SK-N-SH (cell line): ENCODE measurements at regions of chr7 and their contacts with region 1.

Region 1: GRCh38 chr7:1044191-1045068 is at the start of gene GPR146:
- DNase-seq: peak; percentile 100
- H3K4me3 ChIP-seq: peak within 1 kb of the TSS; percentile 78 to 79
- H3K27ac ChIP-seq: peak within 1 kb of the TSS; percentile 66 to 81
- H3K4me1 ChIP-seq: peaks cover 16 to 74% of the 10 kb centered on the region in 2 experiments
- H3K27me3 ChIP-seq: no peaks in the 10 kb centered on the region
- CTCF ChIP-seq: peak; percentile 84
- EP300 ChIP-seq: no peak
- RAD21 ChIP-seq: peak; percentile 48
- polyA plus RNA-seq, gene GPR146: 1.4 and 2.0 TPM in 2 replicates

Region 2: GRCh38 chr7:322111-322671 is 722.2 kb before region 1 on chr7:
- CTCF ChIA-PET with region 1: no interaction called
- POLR2A ChIA-PET with region 1: no interaction called
- DNase-seq: peak; percentile 100
- H3K4me3 ChIP-seq: peak overlapping the region in 1 of 2 experiments; percentile 35; a peak in 1 of 4 replicates
- H3K27ac ChIP-seq: no peak overlapping the region
- H3K4me1 ChIP-seq: peaks cover 0 to 22% of the 10 kb centered on the region in 2 experiments; a peak in 1 of 4 replicates
- H3K27me3 ChIP-seq: peaks cover 39% of the 10 kb centered on the region
- CTCF ChIP-seq: peak; percentile 90
- EP300 ChIP-seq: no peak
- RAD21 ChIP-seq: peak; percentile 89

Region 3: GRCh38 chr7:1059200-1060091 is 15.0 kb after region 1 on chr7:
- CTCF ChIA-PET with region 1: interaction called, 168 read pairs
- POLR2A ChIA-PET with region 1: no interaction called
- DNase-seq: peak; percentile 71
- H3K4me3 ChIP-seq: no peak overlapping the region
- H3K27ac ChIP-seq: no peak overlapping the region
- H3K4me1 ChIP-seq: peaks cover 0 to 32% of the 10 kb centered on the region in 2 experiments; a peak in 1 of 4 replicates
- H3K27me3 ChIP-seq: no peaks in the 10 kb centered on the region
- CTCF ChIP-seq: no peak
- EP300 ChIP-seq: no peak
- RAD21 ChIP-seq: no peak

Region 4: GRCh38 chr7:1076181-1077072 is 32.0 kb after region 1 on chr7:
- CTCF ChIA-PET with region 1: interaction called, 14 read pairs
- POLR2A ChIA-PET with region 1: no interaction called
- DNase-seq: no peak
- H3K4me3 ChIP-seq: no peak overlapping the region
- H3K27ac ChIP-seq: no peak overlapping the region
- H3K4me1 ChIP-seq: peaks cover 0 to 12% of the 10 kb centered on the region in 2 experiments; a peak in 1 of 4 replicates
- H3K27me3 ChIP-seq: no peaks in the 10 kb centered on the region
- CTCF ChIP-seq: no peak
- EP300 ChIP-seq: no peak
- RAD21 ChIP-seq: no peak

Region 5: DNA sequence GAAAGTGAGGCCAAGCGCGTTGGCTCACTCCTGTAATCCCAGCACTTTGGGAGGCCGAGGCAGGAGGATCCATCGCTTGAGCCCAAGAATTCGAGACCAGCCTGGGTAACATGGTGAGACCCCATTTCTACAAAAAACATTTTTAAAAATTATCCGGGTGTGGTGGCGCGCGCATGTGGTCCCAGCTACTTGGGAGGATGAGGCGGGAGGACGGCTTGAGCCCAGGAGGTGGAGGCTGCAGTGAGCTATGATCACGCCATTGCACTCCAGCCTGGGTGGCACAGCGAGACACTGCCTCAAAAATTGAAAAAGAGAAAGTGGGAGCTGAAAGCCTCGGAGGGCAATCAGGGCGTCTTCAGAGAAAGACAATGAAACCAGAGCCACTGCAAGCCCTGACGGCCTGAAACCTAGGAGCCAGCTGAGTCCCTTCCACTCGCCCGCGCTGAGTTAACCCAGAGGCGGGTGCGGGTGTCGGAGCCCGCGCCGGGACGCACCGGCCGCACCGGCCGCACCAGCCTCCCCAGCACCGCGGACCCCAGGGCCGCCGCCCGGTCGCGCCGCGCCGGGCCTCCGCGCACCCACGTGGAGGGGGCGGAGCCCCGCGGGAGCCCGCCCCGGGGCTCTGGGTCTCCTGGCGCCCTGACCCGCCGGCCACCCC is 93.2 kb after region 1 on chr7:
- CTCF ChIA-PET with region 1: interaction called, 10 read pairs
- POLR2A ChIA-PET with region 1: no interaction called
- DNase-seq: no peak
- H3K4me3 ChIP-seq: peak overlapping the region; percentile 68 to 90
- H3K27ac ChIP-seq: peak overlapping the region; percentile 1 to 70; a peak in 2 of 4 replicates
- H3K4me1 ChIP-seq: peaks cover 4 to 19% of the 10 kb centered on the region in 2 experiments; a peak in 2 of 4 replicates
- H3K27me3 ChIP-seq: no peaks in the 10 kb centered on the region
- CTCF ChIP-seq: no peak
- EP300 ChIP-seq: no peak
- RAD21 ChIP-seq: no peak

Region 6: GRCh38 chr7:1275451-1276381 is 231.3 kb after region 1 on chr7:
- CTCF ChIA-PET with region 1: no interaction called
- POLR2A ChIA-PET with region 1: no interaction called
- DNase-seq: peak; percentile 71
- H3K4me3 ChIP-seq: no peak overlapping the region
- H3K27ac ChIP-seq: no peak overlapping the region
- H3K4me1 ChIP-seq: no peaks in the 10 kb centered on the region
- H3K27me3 ChIP-seq: peaks cover 70% of the 10 kb centered on the region
- CTCF ChIP-seq: no peak
- EP300 ChIP-seq: no peak
- RAD21 ChIP-seq: no peak

Region 7: GRCh38 chr7:1520574-1521234 is 476.3 kb after region 1 on chr7:
- CTCF ChIA-PET with region 1: no interaction called
- POLR2A ChIA-PET with region 1: no interaction called
- DNase-seq: no peak
- H3K4me3 ChIP-seq: no peak overlapping the region
- H3K27ac ChIP-seq: no peak overlapping the region
- H3K4me1 ChIP-seq: no peaks in the 10 kb centered on the region
- H3K27me3 ChIP-seq: no peaks in the 10 kb centered on the region
- CTCF ChIP-seq: no peak
- EP300 ChIP-seq: no peak
- RAD21 ChIP-seq: no peak